B cell (primary cell): ENCODE measurements at regions of chr16 and their contacts with region 1.

Region 1: GRCh38 chr16:50266337-50267091 is at the start of gene ADCY7:
- DNase-seq: peak; percentile 75
- ATAC-seq: peak; percentile 91
- H3K4me3 ChIP-seq: peak within 1 kb of the TSS; percentile 56 to 68 (median 59)
- H3K4me3 Mint-ChIP-seq: peak within 1 kb of the TSS; percentile 90
- H3K27ac ChIP-seq: peak within 1 kb of the TSS; percentile 43 to 79
- H3K27ac Mint-ChIP-seq: peak within 1 kb of the TSS; percentile 97
- H3K4me1 ChIP-seq: peaks cover 35 to 44% of the 10 kb centered on the region in 2 donors
- H3K4me1 Mint-ChIP-seq: peaks cover 62% of the 10 kb centered on the region
- H3K27me3 ChIP-seq: peaks cover 0 to 3% (median 0%) of the 10 kb centered on the region in 4 experiments
- H3K27me3 Mint-ChIP-seq: no peaks in the 10 kb centered on the region
- CTCF ChIP-seq: no peak
- total RNA-seq, gene ADCY7: 205 and 207 TPM in 2 replicates

Region 2: DNA sequence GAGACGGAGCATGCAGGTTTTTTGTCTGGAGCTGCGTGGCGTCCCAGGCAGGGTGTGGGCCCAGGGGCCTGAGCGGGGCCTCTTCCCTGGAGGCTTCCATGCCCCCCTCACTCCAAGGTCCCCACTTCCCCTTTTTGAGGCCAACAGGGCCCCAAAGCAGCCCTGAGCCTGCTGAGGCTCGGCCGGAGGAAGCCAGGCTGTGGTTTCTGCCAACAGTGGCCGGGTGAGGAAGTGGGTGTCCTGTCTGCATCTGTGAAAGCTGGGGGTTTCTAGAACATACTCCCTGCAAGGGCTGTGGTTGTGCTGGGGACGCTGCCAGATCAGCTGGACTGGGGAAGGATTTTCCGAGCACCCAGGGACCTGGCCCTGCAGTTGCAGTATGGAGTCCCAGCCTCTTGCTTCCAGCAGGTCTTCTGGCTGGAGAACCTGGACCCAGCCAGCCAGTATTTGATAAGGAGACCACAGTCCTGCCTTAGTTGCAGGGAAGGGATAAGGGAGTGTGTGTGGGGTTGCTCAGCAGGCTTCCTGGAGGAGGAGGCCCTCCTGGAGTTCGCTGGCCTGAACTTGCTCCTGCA is 15.5 kb after region 1 on chr16:
- CTCF ChIA-PET with region 1: interaction called, 63 read pairs
- POLR2A ChIA-PET with region 1: interaction called, 6 read pairs
- intact Hi-C with region 1: loop called (anchors 1 kb)
- DNase-seq: peak; percentile 92
- ATAC-seq: peak; percentile 90
- H3K4me3 ChIP-seq: peak overlapping the region in 4 of 5 experiments; percentile 34 to 54 (median 50)
- H3K4me3 Mint-ChIP-seq: peak overlapping the region; percentile 84
- H3K27ac ChIP-seq: peak overlapping the region; percentile 65 to 93
- H3K27ac Mint-ChIP-seq: peak overlapping the region; percentile 100
- H3K4me1 ChIP-seq: peaks cover 85 to 87% of the 10 kb centered on the region in 2 donors
- H3K4me1 Mint-ChIP-seq: peaks cover 86% of the 10 kb centered on the region
- H3K27me3 ChIP-seq: no peaks in the 10 kb centered on the region
- H3K27me3 Mint-ChIP-seq: no peaks in the 10 kb centered on the region
- CTCF ChIP-seq: no peak

Region 3: GRCh38 chr16:50315346-50315997 is 49.0 kb after region 1 on chr16:
- CTCF ChIA-PET with region 1: interaction called, 5 read pairs
- POLR2A ChIA-PET with region 1: no interaction called
- intact Hi-C with region 1: loop called (anchors 5 kb)
- DNase-seq: no peak
- ATAC-seq: no peak
- H3K4me3 ChIP-seq: no peak overlapping the region
- H3K4me3 Mint-ChIP-seq: no peak overlapping the region
- H3K27ac ChIP-seq: peak overlapping the region in 1 of 2 donors; percentile 5
- H3K27ac Mint-ChIP-seq: peak overlapping the region; percentile 55
- H3K4me1 ChIP-seq: peaks cover 5 to 8% of the 10 kb centered on the region in 2 donors
- H3K4me1 Mint-ChIP-seq: peaks cover 11% of the 10 kb centered on the region
- H3K27me3 ChIP-seq: no peaks in the 10 kb centered on the region
- H3K27me3 Mint-ChIP-seq: no peaks in the 10 kb centered on the region
- CTCF ChIP-seq: no peak